ENCODE measurements at regions of chr16 and their contacts with region 1.

Region 1: GRCh38 chr16:84116720-84117493 is at the start of gene MBTPS1:
- DNase-seq: peak; percentile 99
- ATAC-seq: peak; percentile 99
- total RNA-seq, gene MBTPS1: 91.1 TPM

Region 2: GRCh38 chr16:84091460-84091859 is 25.4 kb before region 1 on chr16:
- intact Hi-C with region 1: loop called (anchors 1 kb)
- DNase-seq: no peak
- ATAC-seq: no peak

Measured in sciatic nerve (tissue), 2 donors.